Activated T-helper 1 cell treated with anti-CD3 and anti-CD28 coated beads, Interleukin-12 subunit alpha, Interleukin-12 subunit beta, Interleukin-2, Interleukin-4 antibody, amounts not matched to agents 30 ng/mL and 10 ng/mL and 1 ng/mL, durations not matched to agents 14 hours and 24 hours and 36 hours (primary cell): ENCODE measurements at regions of chr22 and their contacts with region 1.

Region 1: DNA sequence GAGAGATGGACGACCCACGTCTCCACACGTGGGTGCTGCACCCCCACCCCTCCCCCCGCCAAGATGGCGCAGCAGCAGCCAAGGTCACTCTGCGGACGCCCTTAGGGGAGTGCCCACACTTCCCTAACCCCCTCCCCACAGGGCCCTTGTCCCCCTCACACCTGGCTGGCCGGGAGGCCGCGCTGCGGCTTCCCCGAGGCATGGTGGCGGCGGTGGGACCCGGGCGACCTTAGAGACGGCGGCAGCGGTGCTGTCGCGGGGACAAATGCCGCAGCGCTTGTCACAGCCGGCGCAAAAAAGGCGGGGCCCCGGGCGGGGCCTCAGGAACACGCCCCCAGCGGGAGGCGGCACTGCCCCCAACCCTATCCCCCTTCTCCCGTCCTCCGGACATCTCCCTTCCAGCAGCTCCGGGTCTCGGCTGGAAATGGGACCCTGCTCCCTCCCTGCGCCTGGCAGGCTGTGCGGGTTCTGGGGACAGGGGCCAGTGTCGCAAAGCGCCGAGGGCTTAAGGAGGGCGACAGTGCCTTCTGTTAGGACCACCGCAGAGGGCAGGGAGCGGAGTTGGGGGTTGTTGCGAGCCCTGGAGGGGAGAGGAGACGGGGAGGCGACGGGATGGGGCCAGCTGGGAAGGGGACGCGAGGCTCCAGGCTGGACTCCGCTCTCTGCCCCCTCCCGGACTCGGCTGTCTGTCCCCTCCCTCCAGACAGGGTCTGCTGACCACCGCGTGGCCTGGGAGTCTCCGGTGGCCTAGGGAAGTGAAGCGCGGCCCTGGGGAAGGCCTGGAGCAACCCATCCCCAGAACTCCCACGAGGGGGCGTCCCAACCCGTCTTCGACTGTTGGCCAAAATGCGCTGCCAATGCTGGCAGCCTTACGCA is at the start of gene CHCHD10:
- DNase-seq: peak; percentile 77
- H3K4me3 Mint-ChIP-seq: peak within 1 kb of the TSS; percentile 86
- H3K27ac Mint-ChIP-seq: peak within 1 kb of the TSS; percentile 67
- H3K4me1 Mint-ChIP-seq: peaks cover 24% of the 10 kb centered on the region
- H3K27me3 Mint-ChIP-seq: peaks cover 6% of the 10 kb centered on the region
- total RNA-seq, gene CHCHD10: 89.1 and 96.4 TPM in 2 replicates

Region 2: GRCh38 chr22:23716811-23717801 is 50.8 kb before region 1 on chr22:
- intact Hi-C with region 1: loop called (anchors 2 kb)
- DNase-seq: peak; percentile 81
- H3K4me3 Mint-ChIP-seq: peak overlapping the region; percentile 79
- H3K27ac Mint-ChIP-seq: peak overlapping the region; percentile 79
- H3K4me1 Mint-ChIP-seq: peaks cover 8% of the 10 kb centered on the region
- H3K27me3 Mint-ChIP-seq: peaks cover 3% of the 10 kb centered on the region

Region 3: GRCh38 chr22:23849009-23850006 is 81.4 kb after region 1 on chr22:
- intact Hi-C with region 1: loop called (anchors 1 kb)
- DNase-seq: peak; percentile 82
- H3K4me3 Mint-ChIP-seq: no peak overlapping the region
- H3K27ac Mint-ChIP-seq: no peak overlapping the region
- H3K4me1 Mint-ChIP-seq: no peaks in the 10 kb centered on the region
- H3K27me3 Mint-ChIP-seq: peaks cover 8% of the 10 kb centered on the region